SK-N-SH (cell line): ENCODE measurements at regions of chr15 and their contacts with region 1.

Region 1: DNA sequence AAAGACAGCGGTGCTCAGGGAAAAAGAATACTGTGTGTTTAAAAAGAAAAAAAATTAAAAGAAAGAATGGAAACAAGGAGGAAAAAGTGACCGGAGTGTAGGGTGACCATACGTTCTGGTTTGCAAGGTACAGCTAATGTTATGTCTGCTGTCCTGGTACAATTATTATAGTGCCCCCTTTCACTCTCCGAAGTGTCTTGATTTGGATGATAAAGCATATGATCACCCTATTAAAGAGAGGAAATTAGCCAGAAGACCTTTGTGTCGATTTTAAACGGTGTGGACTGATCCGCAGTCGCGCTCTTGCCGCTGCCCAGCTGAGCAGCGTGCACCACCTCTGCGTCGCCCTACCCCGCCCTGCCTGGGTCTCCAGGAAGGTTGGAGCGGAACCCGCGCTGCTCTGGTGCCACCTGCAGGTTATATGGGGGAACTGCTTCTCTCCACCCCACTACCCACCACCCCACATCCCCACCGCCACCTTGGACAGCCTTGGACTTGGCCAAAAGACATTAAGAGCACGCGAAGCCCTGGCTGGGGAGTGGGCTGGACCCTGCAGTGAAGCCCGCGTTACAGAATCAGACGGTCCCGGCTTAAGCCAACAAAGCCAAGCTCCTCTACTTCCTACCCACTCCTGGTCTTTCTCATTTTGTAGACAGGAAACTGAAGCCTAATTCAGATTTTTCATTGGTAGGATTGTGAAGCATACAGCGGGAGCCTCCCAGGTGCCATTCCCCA is 41.2 kb upstream of the UBE2Q2 start:
- DNase-seq: peak; percentile 91
- H3K4me3 ChIP-seq: peak overlapping the region; percentile 40 to 53; a peak in 3 of 4 replicates
- H3K27ac ChIP-seq: no peak overlapping the region
- H3K4me1 ChIP-seq: peaks cover 0 to 3% of the 10 kb centered on the region in 2 experiments; a peak in 1 of 4 replicates
- H3K27me3 ChIP-seq: peaks cover 40% of the 10 kb centered on the region; the same call in 1 of the 2 replicates
- CTCF ChIP-seq: peak; percentile 73
- EP300 ChIP-seq: no peak
- RAD21 ChIP-seq: peak; percentile 88

Region 2: GRCh38 chr15:75672646-75673425 is 129.2 kb before region 1 on chr15:
- CTCF ChIA-PET with region 1: interaction called, 12 read pairs
- POLR2A ChIA-PET with region 1: no interaction called
- DNase-seq: peak; percentile 64
- H3K4me3 ChIP-seq: no peak overlapping the region
- H3K27ac ChIP-seq: peak overlapping the region; percentile 60
- H3K4me1 ChIP-seq: peaks cover 28 to 30% of the 10 kb centered on the region in 2 experiments; a peak in 3 of 4 replicates
- H3K27me3 ChIP-seq: no peaks in the 10 kb centered on the region
- CTCF ChIP-seq: no peak
- EP300 ChIP-seq: no peak
- RAD21 ChIP-seq: no peak

Region 3: GRCh38 chr15:75732809-75733451 is 69.1 kb before region 1 on chr15:
- CTCF ChIA-PET with region 1: interaction called, 17 read pairs
- POLR2A ChIA-PET with region 1: no interaction called
- DNase-seq: peak; percentile 90
- H3K4me3 ChIP-seq: no peak overlapping the region
- H3K27ac ChIP-seq: no peak overlapping the region; a peak in 1 of 4 replicates
- H3K4me1 ChIP-seq: peaks cover 0 to 7% of the 10 kb centered on the region in 2 experiments; a peak in 1 of 4 replicates
- H3K27me3 ChIP-seq: no peaks in the 10 kb centered on the region
- CTCF ChIP-seq: peak; percentile 70
- EP300 ChIP-seq: no peak
- RAD21 ChIP-seq: peak; percentile 70

Region 4: DNA sequence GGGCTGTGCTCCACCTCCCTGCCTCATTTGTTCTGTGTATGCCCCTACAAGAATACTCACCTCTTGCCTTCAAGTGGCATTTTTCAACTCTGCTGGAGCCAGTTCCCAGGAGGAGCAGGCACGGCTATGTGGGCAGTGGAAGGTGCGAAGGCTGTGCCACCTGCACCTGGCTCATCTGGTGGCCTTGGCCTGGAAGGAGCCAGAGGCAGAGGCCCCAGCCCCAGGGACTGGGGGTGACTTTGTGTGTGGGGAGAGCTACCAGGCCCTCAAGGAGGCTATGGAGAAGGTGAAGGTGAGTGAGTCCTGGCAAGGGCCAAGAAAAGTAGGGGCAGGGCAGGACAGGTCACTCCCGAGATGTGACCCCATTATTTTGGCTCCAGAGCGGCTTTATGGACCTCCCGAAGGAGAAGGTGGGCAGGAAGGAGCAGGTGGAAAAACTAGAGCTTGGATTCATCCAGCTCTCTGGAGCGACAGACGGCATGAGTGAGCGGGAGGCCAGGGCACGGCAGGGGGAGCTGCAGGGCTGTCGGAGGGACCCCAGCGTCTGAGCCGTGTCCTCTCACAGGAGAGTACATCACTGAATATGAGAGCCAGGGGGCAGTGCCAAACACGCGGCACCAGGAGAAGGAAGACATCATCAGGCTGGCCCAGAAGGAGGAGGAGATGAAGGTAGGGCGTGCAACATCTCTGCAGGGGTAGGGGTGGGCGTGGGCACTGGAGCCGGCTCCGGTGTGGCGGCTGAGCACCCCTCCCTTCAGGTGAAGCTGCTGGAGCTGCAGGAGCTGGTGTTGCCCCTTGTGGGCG is 16.1 kb before region 1 on chr15:
- CTCF ChIA-PET with region 1: interaction called, 74 read pairs
- POLR2A ChIA-PET with region 1: interaction called, 4 read pairs
- DNase-seq: peak; percentile 86
- H3K4me3 ChIP-seq: peak overlapping the region in 1 of 2 experiments; percentile 47; a peak in 3 of 4 replicates
- H3K27ac ChIP-seq: no peak overlapping the region
- H3K4me1 ChIP-seq: peaks cover 0 to 3% of the 10 kb centered on the region in 2 experiments; a peak in 1 of 4 replicates
- H3K27me3 ChIP-seq: peaks cover 49% of the 10 kb centered on the region
- CTCF ChIP-seq: peak; percentile 46
- EP300 ChIP-seq: no peak
- RAD21 ChIP-seq: peak; percentile 82

Region 5: DNA sequence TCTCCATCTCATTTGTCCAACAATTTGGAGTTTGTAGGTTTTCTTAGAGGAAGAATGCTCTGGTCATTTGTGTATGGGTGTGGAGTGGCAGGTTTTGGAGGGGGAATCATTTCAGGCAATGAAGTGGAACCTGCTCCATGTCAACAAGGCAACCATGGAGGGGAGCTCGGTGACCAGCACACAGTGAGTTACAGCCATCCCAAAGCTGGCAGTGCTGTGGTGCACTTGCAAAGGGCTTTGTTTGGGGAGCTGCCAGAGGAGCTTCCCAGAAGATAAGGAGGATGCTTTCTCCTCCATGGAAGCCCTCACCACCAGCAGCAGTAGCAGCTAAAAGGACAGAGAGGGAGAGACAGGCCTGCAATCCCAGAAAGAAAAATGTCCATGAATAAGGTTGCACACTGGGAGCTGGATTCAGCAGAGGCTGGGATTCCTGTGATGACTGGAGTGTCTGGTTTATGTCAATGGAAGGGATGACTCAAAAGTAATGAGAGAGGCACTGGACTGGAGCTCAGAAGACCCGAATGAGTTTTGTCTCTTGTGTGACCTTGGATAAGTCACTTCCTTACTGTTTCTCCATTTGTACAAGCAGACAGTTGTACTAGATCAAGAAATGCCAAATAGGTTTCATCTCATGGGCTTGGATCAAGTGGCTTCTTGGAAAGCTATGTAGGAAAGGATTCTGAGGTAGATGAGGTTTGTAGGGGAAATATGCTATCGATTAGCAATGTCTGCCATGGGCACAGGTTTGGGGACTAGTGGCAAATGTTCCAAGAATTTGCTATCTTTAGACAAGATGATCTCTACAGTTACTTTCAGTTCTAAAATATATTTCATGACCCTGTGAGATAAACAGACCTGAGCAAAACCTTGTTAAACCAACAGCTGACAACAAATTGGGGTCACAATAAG is 14.0 kb after region 1 on chr15:
- CTCF ChIA-PET with region 1: interaction called, 22 read pairs
- POLR2A ChIA-PET with region 1: no interaction called
- DNase-seq: no peak
- H3K4me3 ChIP-seq: no peak overlapping the region
- H3K27ac ChIP-seq: no peak overlapping the region
- H3K4me1 ChIP-seq: no peaks in the 10 kb centered on the region; a peak in 1 of 4 replicates
- H3K27me3 ChIP-seq: no peaks in the 10 kb centered on the region
- CTCF ChIP-seq: no peak
- EP300 ChIP-seq: no peak
- RAD21 ChIP-seq: no peak

Region 6: GRCh38 chr15:75823860-75824613 is 22.0 kb after region 1 on chr15:
- CTCF ChIA-PET with region 1: interaction called, 10 read pairs
- POLR2A ChIA-PET with region 1: no interaction called
- DNase-seq: no peak
- H3K4me3 ChIP-seq: no peak overlapping the region
- H3K27ac ChIP-seq: no peak overlapping the region
- H3K4me1 ChIP-seq: no peaks in the 10 kb centered on the region
- H3K27me3 ChIP-seq: no peaks in the 10 kb centered on the region
- CTCF ChIP-seq: no peak
- EP300 ChIP-seq: no peak
- RAD21 ChIP-seq: no peak